ENCODE measurements at regions of chr2 and their contacts with region 1.

Region 1: GRCh38 chr2:138373993-138374408 is 127.6 kb upstream of the SPOPL start:
- DNase-seq: no peak
- H3K4me3 Mint-ChIP-seq: no peak overlapping the region
- H3K27ac Mint-ChIP-seq: no peak overlapping the region
- H3K4me1 Mint-ChIP-seq: no peaks in the 10 kb centered on the region
- H3K27me3 Mint-ChIP-seq: no peaks in the 10 kb centered on the region

Region 2: GRCh38 chr2:137865954-137866540 is 508.0 kb before region 1 on chr2:
- intact Hi-C with region 1: loop called (anchors 5 kb)
- DNase-seq: peak; percentile 76
- H3K4me3 Mint-ChIP-seq: no peak overlapping the region
- H3K27ac Mint-ChIP-seq: no peak overlapping the region
- H3K4me1 Mint-ChIP-seq: no peaks in the 10 kb centered on the region
- H3K27me3 Mint-ChIP-seq: no peaks in the 10 kb centered on the region

Region 3: GRCh38 chr2:137947728-137948336 is 426.2 kb before region 1 on chr2:
- intact Hi-C with region 1: loop called (anchors 10 kb)
- DNase-seq: peak; percentile 67
- H3K4me3 Mint-ChIP-seq: no peak overlapping the region
- H3K27ac Mint-ChIP-seq: no peak overlapping the region
- H3K4me1 Mint-ChIP-seq: peaks cover 9% of the 10 kb centered on the region
- H3K27me3 Mint-ChIP-seq: no peaks in the 10 kb centered on the region

Region 4: DNA sequence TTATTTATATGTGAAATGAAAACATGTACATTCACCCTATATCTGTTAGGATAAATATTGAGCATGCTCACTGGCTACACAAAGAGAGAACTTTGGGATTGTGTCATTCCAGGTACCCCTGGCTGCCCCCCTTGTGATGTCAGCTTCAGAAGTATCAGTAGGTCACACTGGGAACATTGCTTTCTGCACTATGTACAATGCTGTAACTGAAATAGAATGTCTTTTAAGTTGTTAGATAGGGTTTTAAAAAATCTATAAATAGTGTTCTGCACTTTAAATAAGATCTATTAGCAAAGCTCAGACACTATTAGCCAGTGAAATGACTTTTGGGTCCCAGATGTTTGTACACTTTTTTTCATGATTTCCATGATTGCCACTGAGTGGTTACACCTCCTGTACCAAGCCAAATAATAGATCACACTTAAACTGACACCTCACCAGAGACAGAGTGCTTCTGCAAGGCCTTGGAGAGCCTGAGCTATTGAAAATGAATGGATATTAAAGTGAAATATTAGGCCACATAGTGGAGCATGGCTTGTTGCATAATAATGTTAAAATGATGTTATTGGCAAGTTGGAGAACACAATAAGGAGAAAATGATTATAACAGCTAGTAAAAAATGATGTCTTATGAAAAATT is 703.2 kb after region 1 on chr2:
- intact Hi-C with region 1: no loop called
- DNase-seq: no peak
- H3K4me3 Mint-ChIP-seq: no peak overlapping the region
- H3K27ac Mint-ChIP-seq: no peak overlapping the region
- H3K4me1 Mint-ChIP-seq: no peaks in the 10 kb centered on the region
- H3K27me3 Mint-ChIP-seq: no peaks in the 10 kb centered on the region